T-cell (primary cell): ENCODE measurements at regions of chr11 and their contacts with region 1.

Region 1: DNA sequence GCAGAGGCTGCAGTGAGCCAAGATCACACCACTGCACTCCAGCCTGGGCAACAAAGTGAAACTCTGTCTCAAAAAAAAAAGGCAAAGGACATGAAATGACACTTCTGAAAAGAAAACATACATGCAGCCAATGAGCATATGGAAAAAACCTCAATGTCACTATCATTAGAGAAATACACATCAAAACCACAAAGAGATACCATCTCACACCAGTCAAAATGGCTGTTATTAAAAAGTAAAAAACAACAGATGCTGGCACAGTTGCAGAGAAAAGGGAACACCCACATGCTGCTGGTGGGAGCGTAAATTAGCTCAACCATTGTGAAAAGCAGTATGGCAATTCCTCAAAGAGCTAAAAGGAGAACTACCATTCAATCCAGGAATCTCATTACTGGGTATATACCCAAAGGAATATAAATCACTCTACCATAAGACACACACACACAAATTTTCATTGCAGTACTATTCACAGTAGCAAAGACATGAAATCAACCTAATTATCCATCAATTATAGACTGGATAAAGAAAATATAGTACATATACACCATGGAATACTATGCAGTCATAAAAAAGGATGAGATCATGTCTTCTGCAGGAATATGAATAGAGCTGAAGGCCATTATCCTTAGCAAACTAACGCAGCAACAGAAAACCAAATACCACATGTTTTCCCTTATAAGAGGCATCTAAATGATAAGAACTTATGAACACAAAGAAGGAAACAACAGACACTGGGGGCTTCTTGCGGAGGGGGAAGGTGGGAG is 15.7 kb upstream of the C11orf58 start:
- DNase-seq: no peak
- ATAC-seq: no peak
- H3K4me3 ChIP-seq: no peak overlapping the region
- H3K4me3 Mint-ChIP-seq: no peak overlapping the region
- H3K27ac ChIP-seq: no peak overlapping the region
- H3K27ac Mint-ChIP-seq: no peak overlapping the region
- H3K4me1 ChIP-seq: no peaks in the 10 kb centered on the region
- H3K4me1 Mint-ChIP-seq: no peaks in the 10 kb centered on the region
- H3K27me3 ChIP-seq: no peaks in the 10 kb centered on the region
- H3K27me3 Mint-ChIP-seq: peaks cover 0 to 6% of the 10 kb centered on the region in 2 donors

Region 2: DNA sequence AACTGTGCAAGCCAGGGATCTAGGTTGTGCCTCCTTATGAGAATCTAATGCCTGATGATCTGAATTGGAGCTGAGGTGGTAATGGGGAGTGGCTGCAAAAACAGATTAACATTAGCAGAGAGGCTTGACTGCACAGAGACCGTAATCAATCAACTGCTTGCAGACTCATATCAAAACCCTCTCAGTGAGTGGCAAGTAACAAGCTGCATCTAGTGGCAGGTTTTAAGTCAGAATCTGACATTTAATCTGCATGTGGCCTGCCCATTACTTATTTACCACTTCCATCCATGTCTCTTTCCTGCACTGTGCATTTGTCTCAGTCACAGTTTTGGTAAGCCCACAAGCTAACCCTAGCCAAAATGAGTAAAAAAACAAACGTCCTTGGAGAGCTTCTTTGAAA is 26.9 kb after region 1 on chr11:
- CTCF ChIA-PET with region 1: no interaction called
- POLR2A ChIA-PET with region 1: interaction called in 1 of 2 experiments, 10 read pairs
- DNase-seq: no peak
- ATAC-seq: no peak
- H3K4me3 ChIP-seq: no peak overlapping the region
- H3K4me3 Mint-ChIP-seq: no peak overlapping the region
- H3K27ac ChIP-seq: no peak overlapping the region
- H3K27ac Mint-ChIP-seq: peak overlapping the region in 1 of 2 donors; percentile 15
- H3K4me1 ChIP-seq: no peaks in the 10 kb centered on the region
- H3K4me1 Mint-ChIP-seq: peaks cover 33 to 41% (median 40%) of the 10 kb centered on the region in 3 donors
- H3K27me3 ChIP-seq: no peaks in the 10 kb centered on the region
- H3K27me3 Mint-ChIP-seq: no peaks in the 10 kb centered on the region

Region 3: DNA sequence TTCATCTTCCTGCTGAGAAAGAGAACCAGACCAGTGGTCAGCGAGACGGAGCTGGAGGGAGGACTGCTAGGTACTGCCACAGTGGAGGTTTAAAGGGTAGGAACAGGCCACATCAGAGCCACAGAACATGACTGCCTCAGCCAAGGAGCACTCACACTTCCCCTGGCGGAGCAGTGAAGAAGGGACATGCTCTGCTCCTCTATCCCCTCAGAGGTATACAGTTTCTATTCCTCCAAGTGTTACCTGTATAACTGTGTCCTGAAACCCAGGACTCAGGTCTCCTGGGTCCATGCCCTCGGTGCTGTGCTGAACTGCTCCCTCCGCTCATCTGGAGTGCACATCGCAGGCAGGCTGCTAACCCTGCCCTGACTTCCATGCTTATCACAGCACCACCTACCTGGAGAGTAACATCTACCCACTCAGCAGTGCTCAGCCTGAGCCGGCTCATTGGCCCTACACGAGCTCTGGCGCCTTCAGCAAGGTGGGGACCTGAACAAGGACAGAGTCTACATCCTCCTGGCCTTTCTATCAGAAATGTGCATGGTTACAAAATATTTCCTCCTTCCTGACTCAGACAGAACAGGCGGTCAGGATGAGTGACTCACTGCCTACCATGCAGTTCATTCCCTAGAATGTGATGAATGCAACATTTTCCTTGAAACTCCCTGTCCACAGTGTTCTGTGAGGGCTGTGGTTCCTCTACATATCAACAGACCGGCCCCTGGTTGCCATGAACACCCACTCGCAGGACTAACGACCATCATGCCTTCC is 68.6 kb after region 1 on chr11:
- CTCF ChIA-PET with region 1: no interaction called
- POLR2A ChIA-PET with region 1: no interaction called
- DNase-seq: no peak
- ATAC-seq: no peak
- H3K4me3 ChIP-seq: no peak overlapping the region
- H3K4me3 Mint-ChIP-seq: no peak overlapping the region
- H3K27ac ChIP-seq: no peak overlapping the region
- H3K27ac Mint-ChIP-seq: no peak overlapping the region
- H3K4me1 ChIP-seq: no peaks in the 10 kb centered on the region
- H3K4me1 Mint-ChIP-seq: peaks cover 0 to 9% (median 9%) of the 10 kb centered on the region in 3 donors
- H3K27me3 ChIP-seq: no peaks in the 10 kb centered on the region
- H3K27me3 Mint-ChIP-seq: no peaks in the 10 kb centered on the region